PC-3 (cell line): ENCODE measurements at regions of chr1 and their contacts with region 1.

Region 1: GRCh38 chr1:51768971-51769588 is 109.4 kb downstream of the NRDC start:
- DNase-seq: peak; percentile 69
- ATAC-seq: peak; percentile 80
- H3K4me3 ChIP-seq: no peak overlapping the region
- H3K27ac ChIP-seq: no peak overlapping the region
- H3K4me1 ChIP-seq: peaks cover 13% of the 10 kb centered on the region
- H3K27me3 ChIP-seq: no peaks in the 10 kb centered on the region
- CTCF ChIP-seq: peak; percentile 89

Region 2: DNA sequence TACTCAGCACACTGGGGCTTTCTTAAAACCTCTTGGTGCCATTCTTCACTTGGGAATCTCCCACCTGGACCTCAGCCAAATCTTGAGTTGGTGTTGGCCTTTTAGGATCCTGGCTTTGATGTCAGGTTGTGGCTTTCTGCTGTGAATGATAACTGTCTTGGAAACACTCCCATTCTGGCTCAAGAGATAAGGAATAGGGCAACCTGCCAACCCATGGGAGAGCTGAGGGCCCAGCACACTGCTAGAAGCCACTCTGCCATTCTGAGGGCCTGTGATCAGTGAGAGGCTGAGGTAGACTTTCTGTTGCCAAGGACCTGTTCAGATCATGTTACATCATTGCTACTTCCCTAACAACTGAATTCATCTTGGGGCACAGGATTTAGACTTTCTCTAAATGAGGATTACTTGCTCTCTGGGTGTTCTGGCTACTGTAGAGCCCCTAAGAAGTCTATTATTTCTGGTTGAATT is 484.6 kb before region 1 on chr1:
- CTCF ChIA-PET with region 1: no interaction called
- POLR2A ChIA-PET with region 1: no interaction called
- intact Hi-C with region 1: no loop called
- DNase-seq: no peak
- ATAC-seq: no peak
- H3K4me3 ChIP-seq: no peak overlapping the region
- H3K27ac ChIP-seq: no peak overlapping the region
- H3K4me1 ChIP-seq: no peaks in the 10 kb centered on the region
- H3K27me3 ChIP-seq: no peaks in the 10 kb centered on the region
- CTCF ChIP-seq: no peak

Region 3: GRCh38 chr1:51569284-51570062 is 199.6 kb before region 1 on chr1:
- CTCF ChIA-PET with region 1: interaction called, 15 read pairs
- POLR2A ChIA-PET with region 1: interaction called, 3 read pairs
- intact Hi-C with region 1: loop called (anchors 2 kb)
- DNase-seq: peak; percentile 98
- ATAC-seq: peak; percentile 69
- H3K4me3 ChIP-seq: peak overlapping the region; percentile 37
- H3K27ac ChIP-seq: peak overlapping the region; percentile 97
- H3K4me1 ChIP-seq: peaks cover 58% of the 10 kb centered on the region
- H3K27me3 ChIP-seq: no peaks in the 10 kb centered on the region
- CTCF ChIP-seq: peak; percentile 63

Region 4: GRCh38 chr1:51612349-51612998 is 156.6 kb before region 1 on chr1:
- CTCF ChIA-PET with region 1: no interaction called
- POLR2A ChIA-PET with region 1: interaction called, 19 read pairs
- intact Hi-C with region 1: no loop called
- DNase-seq: no peak
- ATAC-seq: no peak
- H3K4me3 ChIP-seq: no peak overlapping the region
- H3K27ac ChIP-seq: no peak overlapping the region
- H3K4me1 ChIP-seq: peaks cover 9% of the 10 kb centered on the region
- H3K27me3 ChIP-seq: no peaks in the 10 kb centered on the region
- CTCF ChIP-seq: no peak

Region 5: DNA sequence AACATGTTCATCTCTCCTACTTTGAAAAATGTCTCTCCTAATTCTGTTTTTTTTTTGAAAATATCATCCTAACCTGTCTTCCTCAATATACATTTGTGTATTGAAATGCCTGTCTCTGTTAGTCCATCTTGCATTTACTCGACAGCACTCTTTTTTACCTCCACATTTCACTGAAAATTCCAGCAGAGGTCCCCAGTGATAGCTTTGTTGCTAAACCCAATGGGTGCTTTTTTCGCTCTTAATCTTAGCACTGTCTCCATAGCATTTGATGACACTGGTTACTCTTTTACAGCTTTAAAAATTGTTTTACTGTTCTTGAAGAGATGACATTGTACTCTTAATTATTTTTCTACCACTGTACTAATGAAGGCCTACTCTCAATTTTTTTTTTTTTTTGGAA is 141.4 kb before region 1 on chr1:
- CTCF ChIA-PET with region 1: interaction called, 3 read pairs
- POLR2A ChIA-PET with region 1: no interaction called
- intact Hi-C with region 1: loop called (anchors 2 kb)
- DNase-seq: peak; percentile 59
- ATAC-seq: no peak
- H3K4me3 ChIP-seq: no peak overlapping the region
- H3K27ac ChIP-seq: no peak overlapping the region
- H3K4me1 ChIP-seq: peaks cover 31% of the 10 kb centered on the region
- H3K27me3 ChIP-seq: no peaks in the 10 kb centered on the region
- CTCF ChIP-seq: peak; percentile 65

Region 6: DNA sequence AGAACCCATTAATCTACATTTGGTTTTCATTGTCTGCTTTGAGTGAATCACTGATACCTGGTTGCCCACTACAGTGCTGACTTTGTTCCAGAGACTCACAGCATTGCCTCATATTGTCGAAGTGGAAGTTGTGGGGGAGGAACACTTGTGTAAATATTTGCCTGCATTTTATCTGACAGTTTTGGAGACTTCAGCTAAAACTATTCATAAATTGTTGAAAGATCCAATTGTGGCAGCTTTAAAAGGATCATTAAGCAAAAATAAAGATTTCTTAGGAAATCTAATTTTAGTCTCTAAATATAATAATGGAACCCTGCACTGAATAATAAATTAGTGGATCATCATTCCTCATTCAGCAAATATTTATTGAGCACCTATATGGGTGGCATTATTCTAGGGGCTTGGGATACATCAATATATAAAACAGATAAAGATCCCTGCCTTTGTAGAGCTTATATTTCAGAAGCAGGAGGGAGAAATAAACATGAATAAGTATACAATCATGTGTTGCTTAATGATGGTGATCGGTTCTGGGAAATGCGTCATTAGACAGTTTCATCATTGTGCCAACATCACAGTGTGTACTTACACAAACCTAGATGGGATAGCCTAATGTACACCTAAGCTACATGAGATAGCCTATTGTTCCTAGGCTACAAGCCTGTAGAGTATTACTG is 78.7 kb before region 1 on chr1:
- CTCF ChIA-PET with region 1: no interaction called
- POLR2A ChIA-PET with region 1: no interaction called
- intact Hi-C with region 1: loop called (anchors 10 kb)
- DNase-seq: peak; percentile 87
- ATAC-seq: peak; percentile 80
- H3K4me3 ChIP-seq: peak overlapping the region; percentile 15; the same call in 1 of the 2 replicates
- H3K27ac ChIP-seq: peak overlapping the region; percentile 95
- H3K4me1 ChIP-seq: peaks cover 44% of the 10 kb centered on the region
- H3K27me3 ChIP-seq: no peaks in the 10 kb centered on the region
- CTCF ChIP-seq: no peak

Region 7: DNA sequence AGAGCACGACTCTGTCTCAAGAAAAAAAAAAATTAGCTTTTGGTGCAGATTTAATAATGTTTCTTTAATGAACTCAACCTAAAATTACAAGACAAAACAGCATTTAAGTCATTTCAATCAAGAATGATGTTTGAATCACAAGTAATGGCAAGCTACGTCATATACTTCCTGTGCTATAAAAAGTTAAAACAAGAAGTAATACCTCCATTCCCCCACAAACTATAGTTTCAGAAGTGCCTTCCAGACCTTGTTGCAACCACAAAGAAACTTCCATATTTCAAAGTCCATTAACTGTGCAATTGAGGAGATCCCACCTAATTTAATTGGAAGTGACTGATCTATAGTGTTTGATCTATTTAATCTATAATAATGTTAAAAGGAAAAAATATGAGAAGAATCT is 94.3 kb after region 1 on chr1:
- CTCF ChIA-PET with region 1: no interaction called
- POLR2A ChIA-PET with region 1: no interaction called
- intact Hi-C with region 1: no loop called
- DNase-seq: no peak
- ATAC-seq: no peak
- H3K4me3 ChIP-seq: no peak overlapping the region
- H3K27ac ChIP-seq: no peak overlapping the region
- H3K4me1 ChIP-seq: peaks cover 8% of the 10 kb centered on the region; the same call in 1 of the 2 replicates
- H3K27me3 ChIP-seq: no peaks in the 10 kb centered on the region
- CTCF ChIP-seq: no peak